Common myeloid progenitor, CD34-positive (primary cell): ENCODE measurements at regions of chr14 and their contacts with region 1.

Region 1: DNA sequence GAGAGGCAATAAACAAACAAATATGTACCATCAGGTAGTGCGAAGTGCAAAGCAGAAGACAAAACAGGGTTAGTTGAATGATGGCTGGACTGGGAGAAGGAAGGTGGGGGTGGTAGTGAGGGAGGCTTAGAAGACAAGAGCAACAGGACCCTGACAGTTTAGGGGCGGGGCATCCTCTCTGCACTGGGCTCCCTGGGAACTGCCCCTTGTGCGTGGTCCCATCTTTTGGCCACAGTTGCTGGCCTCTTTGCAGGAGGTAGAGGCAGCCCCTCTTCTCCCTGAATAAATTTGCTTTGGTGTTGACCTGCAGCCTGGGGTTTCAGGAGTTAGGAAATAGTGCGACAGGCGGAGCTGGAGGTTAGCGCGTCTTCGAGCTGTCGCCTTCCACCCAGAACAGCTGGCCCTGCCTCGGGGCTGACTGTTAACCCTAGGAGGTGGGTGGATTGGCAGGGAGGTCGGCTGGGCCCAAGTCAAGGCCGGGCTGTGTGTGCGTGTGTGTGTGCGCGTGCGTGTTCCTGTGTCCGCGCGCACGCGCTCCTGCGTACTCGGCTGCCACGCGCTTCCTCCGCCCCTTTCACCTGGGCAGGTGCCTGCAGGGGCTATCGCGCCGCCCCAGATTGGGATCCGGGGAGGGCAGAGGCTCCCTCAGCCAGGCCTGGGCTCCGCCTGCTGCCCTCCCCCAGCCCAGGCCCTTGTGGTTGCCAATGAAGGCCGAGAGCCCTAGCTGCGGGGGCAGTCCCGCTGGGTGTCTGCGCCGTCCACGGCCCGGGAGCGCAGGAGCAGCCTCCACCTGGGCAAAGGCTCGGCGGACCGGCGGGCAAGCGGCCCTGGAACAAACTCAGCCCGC is 180.8 kb downstream of the ADCK1 start:
- DNase-seq: peak; percentile 17 to 61 (median 41)
- H3K4me3 ChIP-seq: peak overlapping the region; percentile 5 to 79 (median 51)
- H3K27ac ChIP-seq: no peak overlapping the region
- H3K4me1 ChIP-seq: peaks cover 10 to 49% (median 34%) of the 10 kb centered on the region in 4 experiments
- H3K27me3 ChIP-seq: peaks cover 0 to 4% (median 0%) of the 10 kb centered on the region in 5 experiments

Region 2: GRCh38 chr14:77862154-77862786 is 118.4 kb before region 1 on chr14:
- CTCF ChIA-PET with region 1: interaction called, 27 read pairs
- POLR2A ChIA-PET with region 1: no interaction called
- DNase-seq: peak; percentile 61 to 72 (median 65)
- H3K4me3 ChIP-seq: no peak overlapping the region
- H3K27ac ChIP-seq: no peak overlapping the region
- H3K4me1 ChIP-seq: no peaks in the 10 kb centered on the region
- H3K27me3 ChIP-seq: no peaks in the 10 kb centered on the region

Region 3: DNA sequence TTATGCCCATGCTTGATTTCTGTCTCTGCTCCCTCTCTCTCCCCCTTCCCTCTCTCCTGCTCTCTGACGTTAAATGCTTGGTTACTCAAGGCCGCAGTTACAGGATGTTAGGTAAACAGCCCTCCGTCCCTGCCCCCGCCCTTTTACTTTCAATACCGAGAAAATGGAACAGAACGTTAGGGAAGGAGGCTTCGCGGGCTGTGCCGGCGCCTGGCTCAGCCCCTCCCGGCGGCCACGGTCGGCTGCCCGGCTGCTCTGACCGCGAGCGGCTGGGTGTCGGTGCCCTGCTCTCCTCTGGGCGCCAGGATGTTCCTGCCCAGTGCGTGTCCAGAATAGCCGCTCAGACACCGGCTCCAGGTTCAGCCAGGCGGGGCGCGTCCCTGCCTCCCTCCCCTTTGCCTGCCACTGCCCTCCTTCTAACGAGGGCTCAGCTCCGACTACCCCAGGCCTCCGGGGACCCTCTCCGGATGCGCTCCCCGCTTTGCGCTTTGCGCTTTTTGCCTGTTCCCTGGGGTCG is 14.7 kb before region 1 on chr14:
- CTCF ChIA-PET with region 1: interaction called, 28 read pairs
- POLR2A ChIA-PET with region 1: interaction called, 3 read pairs
- DNase-seq: peak; percentile 89 to 96 (median 94)
- H3K4me3 ChIP-seq: peak overlapping the region; percentile 45 to 84 (median 64)
- H3K27ac ChIP-seq: peak overlapping the region; percentile 26 to 64
- H3K4me1 ChIP-seq: peaks cover 0 to 10% (median 8%) of the 10 kb centered on the region in 4 experiments
- H3K27me3 ChIP-seq: peaks cover 0 to 1% (median 0%) of the 10 kb centered on the region in 5 experiments